ENCODE measurements at regions of chr3 and their contacts with region 1.

Region 1: GRCh38 chr3:32106280-32106928 is at the start of gene GPD1L:
- DNase-seq: peak; percentile 95 to 98 (median 96)
- ATAC-seq: peak; percentile 92 to 97 (median 96)
- H3K4me3 ChIP-seq: peak within 1 kb of the TSS; percentile 55 to 99 (median 87)
- H3K27ac ChIP-seq: peak within 1 kb of the TSS; percentile 82 to 95 (median 88)
- H3K4me1 ChIP-seq: peaks cover 6 to 49% (median 38%) of the 10 kb centered on the region in 12 donors
- H3K27me3 ChIP-seq: no peaks in the 10 kb centered on the region
- CTCF ChIP-seq: peak in 1 of 12 donors; percentile 7
- POLR2A ChIP-seq: peak; percentile 19 to 76
- total RNA-seq, gene GPD1L: 123 to 340 (median 173) TPM

Region 2: DNA sequence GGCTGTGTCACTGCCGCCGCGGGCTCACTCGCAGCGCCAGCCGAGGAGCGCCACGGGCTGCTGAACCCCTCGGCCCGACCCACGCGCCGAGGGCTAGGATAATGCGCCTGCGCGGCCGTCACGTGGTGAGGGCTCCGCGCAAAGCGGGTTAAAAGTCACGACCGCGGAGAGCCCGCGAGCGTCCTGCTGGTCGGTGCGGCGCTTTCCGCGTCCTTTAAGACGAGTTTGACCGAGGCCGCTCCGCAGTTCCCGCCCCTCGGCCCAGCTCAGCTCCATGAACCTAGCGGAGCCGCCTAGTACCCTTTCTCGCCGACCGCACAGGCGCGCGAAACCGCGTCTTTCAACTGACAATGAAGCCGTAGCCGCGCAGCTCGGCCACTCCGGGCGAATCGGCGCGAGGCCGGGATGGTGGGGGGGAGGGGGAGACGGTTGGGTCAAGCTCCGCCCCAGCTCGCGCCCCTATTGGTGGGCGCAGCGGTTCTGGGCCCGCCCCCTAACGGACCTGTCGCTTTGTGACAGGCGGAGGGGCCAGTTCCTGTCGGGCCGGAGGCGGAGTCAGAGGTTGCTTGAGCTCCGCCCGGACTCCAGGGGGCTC is 574.3 kb before region 1 on chr3:
- intact Hi-C with region 1: loop called in 1 of 10 experiments (anchors 5 kb)
- DNase-seq: peak; percentile 99 to 100 (median 100)
- ATAC-seq: peak; percentile 96 to 98 (median 98)
- H3K4me3 ChIP-seq: peak overlapping the region; percentile 71 to 95 (median 90)
- H3K27ac ChIP-seq: peak overlapping the region; percentile 76 to 100 (median 98)
- H3K4me1 ChIP-seq: peaks cover 0 to 48% (median 29%) of the 10 kb centered on the region in 12 donors
- H3K27me3 ChIP-seq: no peaks in the 10 kb centered on the region
- CTCF ChIP-seq: peak in 6 of 12 donors; percentile 8 to 44 (median 22)
- POLR2A ChIP-seq: peak; percentile 7 to 80

Region 3: GRCh38 chr3:31802981-31803740 is 303.2 kb before region 1 on chr3:
- intact Hi-C with region 1: no loop called
- DNase-seq: no peak
- ATAC-seq: peak in 1 of 4 donors; percentile 39
- H3K4me3 ChIP-seq: no peak overlapping the region
- H3K27ac ChIP-seq: no peak overlapping the region
- H3K4me1 ChIP-seq: no peaks in the 10 kb centered on the region
- H3K27me3 ChIP-seq: no peaks in the 10 kb centered on the region
- CTCF ChIP-seq: no peak
- POLR2A ChIP-seq: no peak

Region 4: GRCh38 chr3:32045091-32045964 is 61.1 kb before region 1 on chr3:
- intact Hi-C with region 1: loop called in 2 of 10 experiments (anchors 5 to 10 kb)
- DNase-seq: peak in 3 of 5 donors; percentile 15 to 39 (median 32)
- ATAC-seq: peak; percentile 72 to 95 (median 90)
- H3K4me3 ChIP-seq: peak overlapping the region in 7 of 12 donors; percentile 5 to 17 (median 13)
- H3K27ac ChIP-seq: peak overlapping the region; percentile 28 to 80 (median 72)
- H3K4me1 ChIP-seq: peaks cover 0 to 19% (median 13%) of the 10 kb centered on the region in 12 donors
- H3K27me3 ChIP-seq: no peaks in the 10 kb centered on the region
- CTCF ChIP-seq: no peak
- POLR2A ChIP-seq: no peak

Region 5: GRCh38 chr3:32126305-32127015 is 20.1 kb after region 1 on chr3:
- intact Hi-C with region 1: loop called in 3 of 10 experiments (anchors 1 to 2 kb)
- DNase-seq: peak in 3 of 5 donors; percentile 39 to 77 (median 72)
- ATAC-seq: peak; percentile 88 to 92 (median 92)
- H3K4me3 ChIP-seq: no peak overlapping the region
- H3K27ac ChIP-seq: peak overlapping the region; percentile 2 to 87 (median 64)
- H3K4me1 ChIP-seq: peaks cover 0 to 65% (median 26%) of the 10 kb centered on the region in 12 donors
- H3K27me3 ChIP-seq: no peaks in the 10 kb centered on the region
- CTCF ChIP-seq: no peak
- POLR2A ChIP-seq: no peak